ENCODE measurements at regions of chr1 and their contacts with region 1.

Region 1: GRCh38 chr1:211578640-211579433 is at the start of gene SLC30A1:
- DNase-seq: peak; percentile 100
- ATAC-seq: peak; percentile 94
- H3K4me3 Mint-ChIP-seq: peak within 1 kb of the TSS; percentile 89
- H3K27ac Mint-ChIP-seq: peak within 1 kb of the TSS; percentile 85
- H3K4me1 Mint-ChIP-seq: peaks cover 31% of the 10 kb centered on the region
- H3K27me3 Mint-ChIP-seq: no peaks in the 10 kb centered on the region
- total RNA-seq, gene SLC30A1: 2.9 to 4.5 TPM

Region 2: GRCh38 chr1:210328746-210329503 is 1249.9 kb before region 1 on chr1 and contains the start of gene HHAT:
- CTCF ChIA-PET with region 1: no interaction called
- POLR2A ChIA-PET with region 1: no interaction called
- intact Hi-C with region 1: loop called in 1 of 2 experiments (anchors 5 kb)
- DNase-seq: peak; percentile 80
- ATAC-seq: peak; percentile 34
- H3K4me3 Mint-ChIP-seq: peak within 1 kb of the TSS; percentile 82
- H3K27ac Mint-ChIP-seq: peak within 1 kb of the TSS; percentile 95
- H3K4me1 Mint-ChIP-seq: peaks cover 36% of the 10 kb centered on the region
- H3K27me3 Mint-ChIP-seq: peaks cover 3% of the 10 kb centered on the region
- total RNA-seq, gene HHAT: 0.82 to 0.84 TPM

Region 3: GRCh38 chr1:211382714-211383480 is 195.9 kb before region 1 on chr1:
- CTCF ChIA-PET with region 1: no interaction called
- POLR2A ChIA-PET with region 1: no interaction called
- intact Hi-C with region 1: loop called in 1 of 2 experiments (anchors 2 kb)
- DNase-seq: peak; percentile 86
- ATAC-seq: peak; percentile 72
- H3K4me3 Mint-ChIP-seq: peak overlapping the region; percentile 88
- H3K27ac Mint-ChIP-seq: peak overlapping the region; percentile 98
- H3K4me1 Mint-ChIP-seq: peaks cover 47% of the 10 kb centered on the region
- H3K27me3 Mint-ChIP-seq: no peaks in the 10 kb centered on the region

Region 4: GRCh38 chr1:211654838-211655787 is 76.3 kb after region 1 on chr1:
- CTCF ChIA-PET with region 1: interaction called, 7 read pairs
- POLR2A ChIA-PET with region 1: no interaction called
- intact Hi-C with region 1: loop called (anchors 1 kb)
- DNase-seq: peak; percentile 91
- ATAC-seq: peak; percentile 100
- H3K4me3 Mint-ChIP-seq: no peak overlapping the region
- H3K27ac Mint-ChIP-seq: no peak overlapping the region
- H3K4me1 Mint-ChIP-seq: no peaks in the 10 kb centered on the region
- H3K27me3 Mint-ChIP-seq: peaks cover 1% of the 10 kb centered on the region

Region 5: DNA sequence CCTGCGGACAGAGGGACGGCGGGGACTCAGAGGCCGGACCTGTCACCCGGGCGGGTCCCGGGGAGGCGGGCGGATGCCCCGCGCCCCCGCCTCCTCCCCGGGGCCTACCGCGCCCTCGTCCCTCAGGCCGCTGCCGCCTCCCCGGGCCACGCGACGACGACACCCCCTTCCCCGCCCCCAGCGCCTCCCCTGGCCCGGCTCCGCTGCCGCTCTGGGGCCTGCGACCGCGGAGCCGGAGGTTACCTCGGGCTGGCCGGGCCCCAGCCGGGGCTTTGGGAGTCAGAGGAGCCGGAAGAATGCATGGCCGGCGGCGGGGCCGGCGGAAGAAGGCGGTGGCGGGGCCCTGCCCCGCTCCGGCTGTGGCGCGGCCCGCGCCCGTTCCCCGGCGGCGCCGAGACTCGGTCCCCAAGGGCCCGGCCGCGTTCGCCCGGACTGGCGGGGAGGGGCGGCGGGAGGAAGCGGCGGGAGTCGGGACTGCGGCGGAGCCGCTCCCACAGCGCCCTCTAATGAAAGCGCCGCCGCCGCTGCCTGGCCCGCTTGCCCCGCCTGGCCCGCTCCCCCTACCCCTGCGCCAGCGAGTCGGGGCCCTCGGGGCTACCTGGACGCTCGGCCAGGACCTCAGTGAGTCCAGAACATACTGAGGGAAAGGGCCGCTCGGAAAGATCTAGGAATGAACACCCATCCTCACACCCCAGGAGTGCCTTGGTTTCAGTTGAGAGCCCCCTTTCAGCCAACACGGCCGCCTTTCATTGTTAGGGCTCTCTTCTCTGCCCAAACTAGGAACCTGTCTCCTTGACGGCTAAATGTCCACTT is 251.7 kb after region 1 on chr1 and contains the start of gene LPGAT1:
- CTCF ChIA-PET with region 1: no interaction called
- POLR2A ChIA-PET with region 1: no interaction called
- intact Hi-C with region 1: loop called in 1 of 2 experiments (anchors 2 kb)
- DNase-seq: peak; percentile 86
- ATAC-seq: peak; percentile 83
- H3K4me3 Mint-ChIP-seq: peak within 1 kb of the TSS; percentile 82
- H3K27ac Mint-ChIP-seq: peak within 1 kb of the TSS; percentile 85
- H3K4me1 Mint-ChIP-seq: peaks cover 57% of the 10 kb centered on the region
- H3K27me3 Mint-ChIP-seq: no peaks in the 10 kb centered on the region
- total RNA-seq, gene LPGAT1: 21.7 to 24.9 TPM

Region 6: DNA sequence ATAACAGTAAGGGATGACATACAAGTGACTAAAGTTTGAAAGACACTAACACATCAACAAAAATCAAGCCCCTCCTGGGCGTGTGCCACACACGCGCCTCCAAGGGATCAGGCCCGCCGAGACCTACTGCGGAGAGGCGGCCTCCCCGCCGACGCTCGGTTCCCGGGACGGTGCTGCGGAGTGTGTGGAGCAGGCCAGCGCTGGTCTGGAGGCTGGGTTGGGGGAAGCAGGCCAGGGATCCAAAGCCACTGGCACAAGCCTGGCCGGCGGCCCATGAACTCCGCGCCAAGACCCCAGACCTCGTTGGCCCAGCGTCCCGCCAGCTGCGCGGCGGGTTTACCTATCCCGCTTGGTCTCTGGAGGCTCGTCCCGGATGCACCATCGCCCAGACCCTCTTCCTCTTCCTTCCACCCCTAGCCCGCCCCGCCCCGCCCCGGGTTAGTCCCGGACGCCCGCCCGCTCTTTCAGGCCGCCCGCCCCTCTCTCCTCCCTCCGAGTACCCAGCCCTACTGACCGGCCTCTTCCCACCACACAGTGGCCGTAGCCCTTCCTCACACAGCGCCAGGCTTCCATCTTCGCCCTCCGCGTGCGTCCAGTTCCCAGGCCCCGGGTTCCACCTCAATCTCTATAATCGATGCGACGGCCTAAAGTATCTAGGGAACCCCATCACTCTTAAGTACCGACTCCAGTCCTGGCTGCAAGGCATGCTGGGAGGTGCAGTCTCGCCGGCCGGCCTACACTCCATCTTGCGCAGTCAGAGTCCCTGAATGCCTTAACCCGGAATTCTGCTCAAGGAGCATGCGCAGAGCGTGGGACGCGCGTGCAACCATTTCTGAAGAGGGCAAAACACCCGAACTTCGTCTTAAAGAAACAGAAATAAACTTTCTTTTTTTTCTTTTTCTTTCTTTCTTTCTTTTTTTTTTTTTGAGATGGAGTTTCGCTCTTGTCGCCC is 1436.5 kb after region 1 on chr1 and contains the start of gene ANGEL2:
- CTCF ChIA-PET with region 1: no interaction called
- POLR2A ChIA-PET with region 1: no interaction called
- intact Hi-C with region 1: loop called in 1 of 2 experiments (anchors 1 kb)
- DNase-seq: peak; percentile 97
- ATAC-seq: peak; percentile 99
- H3K4me3 Mint-ChIP-seq: peak within 1 kb of the TSS; percentile 100
- H3K27ac Mint-ChIP-seq: peak within 1 kb of the TSS; percentile 100
- H3K4me1 Mint-ChIP-seq: peaks cover 30% of the 10 kb centered on the region
- H3K27me3 Mint-ChIP-seq: no peaks in the 10 kb centered on the region
- total RNA-seq, gene ANGEL2: 41.3 to 51.5 TPM

Measured in activated CD4-positive, alpha-beta T cell treated with anti-CD3 and anti-CD28 coated beads for 36 hours (primary cell).